ENCODE measurements at regions of chr3 and their contacts with region 1.

Region 1: GRCh38 chr3:138051946-138052802 is 42.2 kb downstream of the CLDN18 start:
- DNase-seq: no peak
- H3K4me3 ChIP-seq: no peak overlapping the region
- H3K27ac ChIP-seq: no peak overlapping the region
- H3K4me1 ChIP-seq: peaks cover 0 to 3% (median 1%) of the 10 kb centered on the region in 4 experiments; a peak in 3 of 7 replicates
- H3K27me3 ChIP-seq: no peaks in the 10 kb centered on the region
- CTCF ChIP-seq: peak; percentile 74 to 81 (median 81)
- EP300 ChIP-seq: no peak
- POLR2A ChIP-seq: no peak
- RAD21 ChIP-seq: peak; percentile 76 to 81

Region 2: DNA sequence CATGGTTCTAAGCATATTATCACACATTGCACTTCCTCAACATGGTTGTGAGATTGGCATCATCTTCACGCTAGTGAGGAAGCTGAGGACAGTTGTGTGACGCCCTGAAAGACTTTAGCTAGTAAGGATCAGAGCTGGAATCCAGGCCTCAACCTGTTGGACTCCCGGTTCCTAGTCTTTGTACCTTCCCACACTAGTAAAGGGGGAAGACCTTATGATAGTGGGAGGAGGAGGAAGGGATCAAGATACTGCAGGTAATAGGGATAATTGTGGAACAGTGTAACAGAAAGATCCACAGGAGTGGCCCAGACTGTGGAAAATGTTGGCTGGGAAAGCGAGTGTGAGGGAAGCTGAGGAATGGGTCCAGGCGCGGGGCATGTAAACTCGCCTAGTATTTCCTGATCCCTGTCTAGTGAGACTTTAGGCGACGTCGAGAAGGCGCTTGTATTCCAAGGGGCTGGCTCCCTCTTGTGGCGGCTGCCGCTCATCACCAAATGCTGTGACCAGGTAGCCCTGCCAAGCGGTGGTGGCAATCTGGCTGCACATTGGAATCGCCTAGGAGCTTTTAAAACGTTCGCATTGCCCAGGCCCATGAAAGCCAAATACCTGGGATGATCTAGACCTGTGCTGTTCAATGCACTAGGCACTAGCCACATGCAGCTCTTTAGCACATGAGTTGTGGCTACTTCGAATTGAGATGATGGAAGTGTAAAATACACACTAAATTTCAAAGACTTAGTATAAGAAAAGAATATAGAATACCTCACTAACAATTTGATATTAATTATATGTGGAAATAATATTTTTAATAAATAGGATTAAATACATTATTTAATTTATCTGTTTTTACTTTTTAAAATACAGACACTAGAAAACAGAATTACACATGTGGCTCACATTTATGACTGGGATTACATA is 81.0 kb before region 1 on chr3:
- CTCF ChIA-PET with region 1: interaction called, 15 read pairs
- POLR2A ChIA-PET with region 1: no interaction called
- DNase-seq: peak; percentile 73 to 93
- H3K4me3 ChIP-seq: no peak overlapping the region
- H3K27ac ChIP-seq: no peak overlapping the region
- H3K4me1 ChIP-seq: no peaks in the 10 kb centered on the region
- H3K27me3 ChIP-seq: no peaks in the 10 kb centered on the region; a peak in 1 of 7 replicates
- CTCF ChIP-seq: peak; percentile 90 to 95 (median 92)
- EP300 ChIP-seq: no peak
- POLR2A ChIP-seq: no peak
- RAD21 ChIP-seq: peak; percentile 95 to 97

Region 3: DNA sequence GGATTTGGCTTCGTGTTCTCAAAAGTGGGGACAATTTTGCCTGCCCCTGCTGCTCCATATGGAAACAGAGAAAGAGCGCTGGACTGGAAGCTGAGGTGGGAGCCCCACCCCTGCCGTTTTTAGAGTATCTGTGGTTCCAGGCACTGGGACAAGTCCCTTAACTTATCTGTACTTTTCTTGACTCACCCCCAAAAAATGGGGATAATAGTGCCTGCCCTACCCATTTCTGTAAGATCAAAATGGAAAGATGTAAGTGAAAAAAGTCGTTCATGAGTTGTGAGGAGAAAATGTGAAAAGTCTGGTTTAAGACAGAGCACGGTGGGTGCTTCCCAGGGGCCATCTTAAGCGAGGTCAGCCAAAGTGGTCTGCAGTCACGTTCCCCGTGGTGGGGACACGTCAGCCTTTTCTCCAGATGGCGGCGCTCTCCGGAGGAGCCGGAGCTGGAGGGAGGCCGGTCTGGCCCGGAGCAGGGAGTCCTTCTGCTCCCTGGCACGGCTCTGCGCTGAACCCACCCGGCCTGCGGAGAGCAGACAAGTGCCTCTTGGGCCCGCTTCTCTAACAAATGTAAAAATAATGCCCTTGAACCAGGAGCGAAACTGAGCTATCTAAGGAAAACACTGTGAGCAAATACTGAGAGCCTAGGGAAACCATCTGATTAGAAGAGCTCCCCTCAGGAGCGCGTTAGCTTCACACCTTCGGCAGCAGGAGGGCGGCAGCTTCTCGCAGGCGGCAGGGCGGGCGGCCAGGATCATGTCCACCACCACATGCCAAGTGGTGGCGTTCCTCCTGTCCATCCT is 42.5 kb before region 1 on chr3 and contains the start of gene CLDN18:
- CTCF ChIA-PET with region 1: interaction called, 15 read pairs
- POLR2A ChIA-PET with region 1: no interaction called
- DNase-seq: peak in 1 of 2 experiments; percentile 54
- H3K4me3 ChIP-seq: no peak within 1 kb of the TSS
- H3K27ac ChIP-seq: no peak within 1 kb of the TSS
- H3K4me1 ChIP-seq: no peaks in the 10 kb centered on the region
- H3K27me3 ChIP-seq: no peaks in the 10 kb centered on the region
- CTCF ChIP-seq: peak; percentile 24 to 44 (median 38); a peak in 3 of 4 replicates
- EP300 ChIP-seq: no peak
- POLR2A ChIP-seq: no peak
- RAD21 ChIP-seq: peak; percentile 20 to 37; a peak in 2 of 4 replicates
- total RNA-seq, gene CLDN18: not detected in 2 replicates

Measured in H1 (cell line).